Vagina (tissue), 2 donors: ENCODE measurements at regions of chr2 and their contacts with region 1.

Region 1: GRCh38 chr2:41966431-41966893 is 81.4 kb upstream of the PKDCC start:
- DNase-seq: peak in 1 of 2 donors; percentile 96
- H3K4me3 ChIP-seq: peak overlapping the region in 1 of 2 donors; percentile 15
- H3K27ac ChIP-seq: peak overlapping the region; percentile 80
- H3K4me1 ChIP-seq: peaks cover 45% of the 10 kb centered on the region
- H3K27me3 ChIP-seq: no peaks in the 10 kb centered on the region
- CTCF ChIP-seq: no peak
- POLR2A ChIP-seq: no peak

Region 2: DNA sequence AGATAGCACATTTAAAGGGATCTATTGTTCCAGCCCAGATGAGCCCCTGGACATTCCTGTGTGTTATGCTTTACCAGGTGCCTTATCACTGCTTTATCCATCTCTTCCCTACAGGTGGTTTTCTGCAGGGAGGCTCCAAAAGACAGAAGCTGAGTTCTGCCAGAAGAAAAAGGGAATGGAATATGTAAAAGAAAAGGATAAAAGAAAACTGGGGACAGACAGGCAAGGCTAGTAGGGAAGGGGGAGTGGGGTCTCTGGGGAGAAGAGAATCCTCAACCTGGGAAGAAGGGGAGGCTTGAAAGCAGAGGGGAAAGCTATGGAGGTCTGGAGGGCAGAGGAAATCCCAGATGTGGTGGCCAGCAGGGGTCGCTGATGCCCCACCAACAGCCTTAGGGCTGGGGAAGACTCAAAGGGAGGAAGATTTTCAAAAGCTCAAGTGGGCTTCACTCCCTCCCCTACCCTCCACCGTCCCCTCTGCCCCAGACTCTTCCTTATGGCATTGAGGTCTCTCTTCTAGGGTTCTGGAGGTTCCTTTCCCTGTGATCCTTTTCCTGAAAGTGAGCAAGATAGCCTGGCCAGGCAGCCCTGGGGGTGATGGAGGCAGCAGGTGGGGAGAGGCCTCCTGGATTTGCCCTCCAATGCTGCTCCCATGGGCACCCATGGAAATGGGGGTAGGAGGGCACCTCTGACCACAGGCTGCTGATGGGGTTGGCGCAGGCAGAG is 96.8 kb before region 1 on chr2:
- intact Hi-C with region 1: loop called (anchors 10 kb)
- DNase-seq: no peak
- H3K4me3 ChIP-seq: no peak overlapping the region
- H3K27ac ChIP-seq: no peak overlapping the region
- H3K4me1 ChIP-seq: peaks cover 14% of the 10 kb centered on the region
- H3K27me3 ChIP-seq: no peaks in the 10 kb centered on the region
- CTCF ChIP-seq: peak; percentile 82 to 87 (median 84)
- POLR2A ChIP-seq: no peak

Region 3: GRCh38 chr2:41933585-41934320 is 32.7 kb before region 1 on chr2:
- intact Hi-C with region 1: loop called (anchors 2 kb)
- DNase-seq: no peak
- H3K4me3 ChIP-seq: no peak overlapping the region
- H3K27ac ChIP-seq: peak overlapping the region; percentile 46
- H3K4me1 ChIP-seq: peaks cover 45% of the 10 kb centered on the region
- H3K27me3 ChIP-seq: no peaks in the 10 kb centered on the region
- CTCF ChIP-seq: no peak
- POLR2A ChIP-seq: no peak

Region 4: DNA sequence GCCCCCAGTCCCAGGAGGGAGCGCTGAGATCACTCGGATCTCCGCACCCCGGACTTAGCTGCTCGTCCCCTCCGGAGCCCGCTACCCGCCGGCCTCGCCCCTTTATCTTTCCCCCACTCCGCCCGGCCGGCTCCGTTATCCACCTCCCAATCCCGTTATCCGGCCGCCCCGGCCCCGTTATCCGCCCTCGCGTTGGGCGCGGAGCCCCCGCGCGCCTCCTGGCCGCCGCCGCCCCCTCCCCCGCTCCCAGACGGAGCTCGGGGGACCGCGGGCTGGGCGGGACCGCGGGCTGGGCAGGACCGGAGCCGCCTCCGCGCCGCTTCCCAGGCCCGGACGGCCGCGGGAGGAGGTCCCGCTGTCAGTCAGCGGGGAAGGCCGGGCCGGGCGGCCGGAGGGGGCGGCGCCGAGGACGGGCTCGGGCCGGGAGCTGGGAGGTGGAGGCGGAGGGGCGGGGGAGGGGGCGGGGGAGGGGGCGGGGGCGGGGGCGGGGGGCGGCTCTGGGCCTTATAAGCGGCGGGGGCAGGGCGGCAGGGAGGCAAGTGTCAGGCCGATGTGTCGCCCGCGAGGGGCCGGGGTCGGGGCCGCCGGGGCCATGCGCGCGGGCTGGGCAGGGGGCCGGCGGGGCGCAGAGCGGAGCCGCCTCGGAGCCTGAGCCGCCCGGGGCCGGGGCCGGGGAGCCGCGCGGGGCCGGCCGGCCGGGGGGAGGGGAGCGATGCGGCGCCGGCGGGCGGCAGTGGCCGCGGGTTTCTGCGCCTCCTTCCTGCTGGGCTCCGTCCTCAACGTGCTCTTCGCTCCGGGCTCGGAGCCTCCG is 81.2 kb after region 1 on chr2 and contains the start of gene PKDCC:
- intact Hi-C with region 1: loop called (anchors 2 kb)
- DNase-seq: no peak
- H3K4me3 ChIP-seq: peak within 1 kb of the TSS; percentile 68 to 88
- H3K27ac ChIP-seq: peak within 1 kb of the TSS; percentile 89
- H3K4me1 ChIP-seq: peaks cover 42% of the 10 kb centered on the region
- H3K27me3 ChIP-seq: no peaks in the 10 kb centered on the region
- CTCF ChIP-seq: no peak
- POLR2A ChIP-seq: peak in 1 of 2 donors; percentile 91
- total RNA-seq, gene PKDCC: 146 TPM